Mammary epithelial cell (primary cell): ENCODE measurements at regions of chr1 and their contacts with region 1.

Region 1: DNA sequence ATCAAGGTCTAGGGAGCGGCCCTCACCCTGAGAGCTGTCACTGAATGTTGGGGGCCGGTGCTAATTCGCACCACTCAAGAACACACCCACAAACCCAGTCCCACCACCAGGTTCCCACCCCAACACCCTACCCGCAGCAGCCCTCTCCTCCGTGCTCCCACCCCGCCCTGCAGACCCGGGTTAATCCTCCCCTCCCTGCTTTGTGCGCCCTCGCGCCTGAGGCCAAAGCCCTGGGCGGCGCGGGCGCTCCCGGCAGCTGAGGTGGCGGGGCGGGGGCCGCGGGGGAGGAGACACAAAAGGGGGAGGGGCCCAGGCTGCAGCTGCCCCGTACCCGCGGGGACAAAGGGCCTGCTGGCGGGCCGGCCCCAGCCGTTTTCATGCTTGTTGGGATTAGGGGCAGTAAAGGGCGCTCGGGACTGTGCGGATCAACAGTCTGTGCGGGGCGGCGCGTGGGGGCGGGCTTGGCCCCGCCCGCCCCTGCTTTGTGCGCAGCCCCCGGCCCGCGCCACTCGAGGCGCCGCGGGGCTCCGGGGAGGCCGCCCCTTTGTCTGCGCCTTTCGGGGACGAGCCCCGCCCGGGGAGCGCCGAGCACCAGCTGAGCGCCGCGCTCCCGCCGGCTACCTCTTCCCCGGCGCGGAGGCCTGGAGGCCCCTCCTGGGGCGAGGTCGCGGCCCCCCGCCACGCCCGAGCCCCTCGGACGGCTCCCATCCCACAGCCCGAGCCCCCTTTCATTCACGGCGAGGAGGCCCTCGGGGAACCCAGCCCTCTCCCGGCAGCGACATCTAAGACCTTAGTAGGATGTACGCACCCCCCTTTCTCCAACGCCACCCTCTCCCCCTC is 10.9 kb downstream of the C1orf216 start:
- DNase-seq: no peak
- H3K4me3 ChIP-seq: peak overlapping the region; percentile 22 to 40 (median 24)
- H3K27ac ChIP-seq: no peak overlapping the region
- H3K4me1 ChIP-seq: peaks cover 4% of the 10 kb centered on the region
- H3K27me3 ChIP-seq: peaks cover 4% of the 10 kb centered on the region
- CTCF ChIP-seq: no peak

Region 2: GRCh38 chr1:35650416-35650815 is 57.4 kb before region 1 on chr1:
- CTCF ChIA-PET with region 1: no interaction called
- dilution Hi-C with region 1: loop called (anchors 5 kb)
- in situ Hi-C with region 1: no loop called
- intact Hi-C with region 1: no loop called
- DNase-seq: no peak
- H3K4me3 ChIP-seq: no peak overlapping the region
- H3K27ac ChIP-seq: no peak overlapping the region
- H3K4me1 ChIP-seq: no peaks in the 10 kb centered on the region
- H3K27me3 ChIP-seq: no peaks in the 10 kb centered on the region
- CTCF ChIP-seq: no peak

Region 3: DNA sequence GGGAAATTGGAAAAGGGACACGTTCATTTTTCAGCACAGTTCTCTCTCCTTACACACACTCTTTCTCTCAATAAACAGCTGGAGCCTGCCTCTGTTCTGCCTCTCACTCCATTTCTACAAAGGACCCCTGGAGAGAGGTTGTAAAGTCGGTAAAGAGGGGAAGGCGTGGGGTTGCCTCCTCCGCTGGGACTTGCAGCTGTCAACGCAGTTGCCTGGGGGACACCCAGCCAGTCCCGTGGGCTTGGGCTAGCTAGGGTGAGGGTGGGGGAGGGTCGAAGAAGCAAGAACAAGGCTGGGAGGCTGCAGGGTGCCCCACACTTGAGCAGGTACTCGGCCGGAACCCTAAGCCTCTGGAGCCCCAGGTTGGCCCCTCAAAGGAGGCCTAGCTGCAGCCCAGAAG is 16.7 kb before region 1 on chr1:
- CTCF ChIA-PET with region 1: no interaction called
- dilution Hi-C with region 1: no loop called
- in situ Hi-C with region 1: no loop called
- intact Hi-C with region 1: no loop called
- DNase-seq: no peak
- H3K4me3 ChIP-seq: no peak overlapping the region
- H3K27ac ChIP-seq: no peak overlapping the region
- H3K4me1 ChIP-seq: no peaks in the 10 kb centered on the region
- H3K27me3 ChIP-seq: peaks cover 4% of the 10 kb centered on the region
- CTCF ChIP-seq: no peak

Region 4: GRCh38 chr1:35857830-35858229 is 150.0 kb after region 1 on chr1:
- CTCF ChIA-PET with region 1: no interaction called
- dilution Hi-C with region 1: no loop called
- in situ Hi-C with region 1: no loop called
- intact Hi-C with region 1: no loop called
- DNase-seq: no peak
- H3K4me3 ChIP-seq: no peak overlapping the region
- H3K27ac ChIP-seq: no peak overlapping the region
- H3K4me1 ChIP-seq: no peaks in the 10 kb centered on the region
- H3K27me3 ChIP-seq: no peaks in the 10 kb centered on the region
- CTCF ChIP-seq: peak in 1 of 2 donors; percentile 4